Heart right ventricle (tissue), 16 donors: ENCODE measurements at regions of chr2 and their contacts with region 1.

Region 1: DNA sequence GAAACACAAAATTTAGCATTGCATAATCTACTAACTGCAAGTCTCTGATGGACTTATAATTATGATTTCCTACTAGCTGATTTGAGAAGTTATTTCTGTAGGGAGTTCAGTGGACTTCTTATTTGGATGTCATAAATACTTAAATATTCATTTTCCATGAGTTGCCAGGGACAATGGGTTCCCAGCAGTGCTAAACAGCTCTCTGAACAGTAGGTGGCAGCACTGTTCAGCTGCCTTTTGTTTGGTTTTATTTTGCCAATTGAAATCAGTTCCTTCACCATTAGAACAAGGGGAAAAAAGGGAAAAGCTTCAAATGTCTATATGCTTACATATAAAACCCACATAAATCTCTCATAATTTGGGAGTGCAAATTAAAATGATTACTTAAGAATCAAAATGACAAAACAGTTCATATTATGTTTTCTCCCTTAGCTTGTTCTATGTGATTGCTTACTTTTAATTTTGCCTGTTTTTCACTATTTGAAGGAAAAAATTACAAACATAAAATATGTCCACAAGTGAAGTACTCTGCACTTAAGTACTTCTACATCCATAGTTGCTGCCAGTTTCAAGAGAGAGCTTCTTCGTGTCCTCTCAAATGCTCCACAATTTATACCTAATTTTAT is 898.9 kb downstream of the CPS1 start:
- DNase-seq: peak in 1 of 2 donors; percentile 5
- ATAC-seq: peak in 3 of 8 donors; percentile 17 to 49 (median 39)
- H3K4me3 ChIP-seq: no peak overlapping the region
- H3K27ac ChIP-seq: no peak overlapping the region
- H3K4me1 ChIP-seq: no peaks in the 10 kb centered on the region
- H3K27me3 ChIP-seq: no peaks in the 10 kb centered on the region
- CTCF ChIP-seq: peak; percentile 60 to 94 (median 84)

Region 2: GRCh38 chr2:211487733-211488132 is 32.4 kb after region 1 on chr2:
- intact Hi-C with region 1: loop called in 1 of 10 experiments (anchors 2 kb)
- DNase-seq: no peak
- ATAC-seq: no peak
- H3K4me3 ChIP-seq: no peak overlapping the region
- H3K27ac ChIP-seq: no peak overlapping the region
- H3K4me1 ChIP-seq: no peaks in the 10 kb centered on the region
- H3K27me3 ChIP-seq: no peaks in the 10 kb centered on the region
- CTCF ChIP-seq: no peak

Region 3: DNA sequence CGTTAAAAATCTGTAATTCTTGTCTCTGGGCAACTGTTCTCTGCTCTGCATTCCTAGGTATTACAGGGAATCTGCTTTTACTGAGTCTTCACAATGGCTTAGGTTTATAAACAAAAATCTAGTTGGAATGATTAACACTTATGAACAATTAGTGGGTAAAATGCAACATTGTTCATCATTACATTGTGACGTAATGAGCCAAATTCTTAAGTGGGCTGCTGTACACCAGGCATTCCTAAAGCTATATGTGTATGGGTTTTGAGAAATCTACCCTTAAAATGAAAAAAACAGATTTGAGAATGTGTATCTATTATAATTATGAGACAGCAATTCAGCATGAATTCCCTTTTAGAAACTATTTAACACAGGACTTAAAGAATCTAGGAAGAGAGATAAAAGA is 1124.8 kb after region 1 on chr2:
- intact Hi-C with region 1: loop called in 1 of 10 experiments (anchors 10 kb)
- DNase-seq: no peak
- ATAC-seq: no peak
- H3K4me3 ChIP-seq: no peak overlapping the region
- H3K27ac ChIP-seq: no peak overlapping the region
- H3K4me1 ChIP-seq: no peaks in the 10 kb centered on the region
- H3K27me3 ChIP-seq: no peaks in the 10 kb centered on the region
- CTCF ChIP-seq: no peak